BJ (cell line): ENCODE measurements at regions of chr11 and their contacts with region 1.

Region 1: GRCh38 chr11:44621140-44621681 is 55.7 kb downstream of the CD82 start:
- DNase-seq: no peak
- H3K4me3 ChIP-seq: no peak overlapping the region
- H3K27me3 ChIP-seq: no peaks in the 10 kb centered on the region
- CTCF ChIP-seq: peak; percentile 98

Region 2: DNA sequence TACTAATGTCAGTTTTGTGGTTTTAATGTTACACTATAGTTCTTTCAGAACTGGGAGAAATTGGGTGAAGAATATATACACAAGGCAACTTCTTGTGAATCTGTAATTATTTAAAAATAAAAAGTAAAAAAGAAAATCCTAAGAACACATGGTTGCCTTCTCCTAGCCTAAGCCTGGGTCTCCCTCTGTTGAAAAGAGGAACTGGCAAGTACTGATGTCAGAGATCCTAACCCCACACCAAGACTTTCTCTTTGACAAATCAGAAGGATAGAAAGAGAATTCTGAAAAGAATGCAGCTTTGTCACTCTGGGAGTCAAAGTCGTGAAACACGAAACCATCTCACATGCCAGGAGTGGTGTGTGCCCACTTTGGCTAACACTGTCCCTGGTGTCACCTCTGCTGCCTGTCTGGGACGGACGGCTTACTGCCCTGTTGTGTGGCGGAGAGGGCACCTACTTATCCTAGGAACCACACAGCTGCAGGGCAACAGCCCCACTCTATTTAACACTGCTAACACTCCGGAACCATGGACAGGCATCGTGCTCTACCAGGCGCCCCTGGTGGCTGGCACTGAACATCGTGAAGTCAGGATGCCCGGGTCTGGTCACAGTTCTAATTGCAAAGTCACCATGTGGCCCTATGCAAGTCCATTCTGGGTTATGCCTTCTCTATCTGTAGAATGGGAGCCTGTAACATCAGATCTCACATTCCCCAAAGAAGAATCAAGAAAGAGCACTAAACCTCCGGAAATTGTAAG is 164.5 kb before region 1 on chr11:
- CTCF ChIA-PET with region 1: no interaction called
- POLR2A ChIA-PET with region 1: no interaction called
- DNase-seq: no peak
- H3K4me3 ChIP-seq: no peak overlapping the region
- H3K27me3 ChIP-seq: peaks cover 2% of the 10 kb centered on the region; the same call in 1 of the 2 replicates
- CTCF ChIP-seq: no peak

Region 3: DNA sequence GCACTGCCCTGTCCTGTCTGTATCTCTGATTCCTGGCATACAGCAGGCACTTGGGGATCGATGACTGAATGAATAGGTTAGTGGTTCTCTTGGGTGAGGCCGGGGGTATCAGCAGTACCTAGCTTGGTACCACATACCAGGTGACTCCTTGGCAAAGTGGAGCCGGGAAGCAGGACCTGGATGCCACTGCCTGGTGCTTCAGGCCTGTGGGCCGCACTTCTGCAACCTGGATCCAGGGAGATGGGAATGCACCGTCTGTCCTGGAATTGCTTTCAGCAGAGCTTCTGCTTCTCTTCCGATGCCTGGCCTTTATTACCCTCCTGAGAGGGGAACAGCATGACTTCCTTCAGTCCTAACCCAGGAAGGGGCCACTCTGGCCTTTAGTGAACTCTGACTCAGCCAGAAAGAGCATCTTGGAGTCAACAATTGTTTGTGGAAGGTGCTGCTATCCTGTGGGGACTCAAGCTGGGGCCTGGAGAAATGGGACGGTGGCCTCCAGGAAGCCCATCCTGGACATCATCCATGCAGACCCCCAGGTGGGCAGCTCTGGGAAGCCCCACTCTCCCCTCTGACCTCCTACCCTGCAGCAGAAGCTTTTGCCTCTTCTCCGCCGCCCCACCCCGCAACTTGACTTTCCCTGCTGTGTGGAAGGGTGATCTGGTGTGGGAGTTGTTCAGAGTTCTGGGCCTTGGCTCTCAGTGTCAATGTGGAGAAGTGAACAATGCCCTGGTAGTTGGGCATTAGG is 50.6 kb before region 1 on chr11:
- CTCF ChIA-PET with region 1: interaction called, 606 read pairs
- POLR2A ChIA-PET with region 1: no interaction called
- DNase-seq: no peak
- H3K4me3 ChIP-seq: no peak overlapping the region
- H3K27me3 ChIP-seq: no peaks in the 10 kb centered on the region
- CTCF ChIP-seq: no peak

Region 4: GRCh38 chr11:44726283-44727113 is 105.3 kb after region 1 on chr11 and contains the start of gene TSPAN18:
- CTCF ChIA-PET with region 1: interaction called, 11 read pairs
- POLR2A ChIA-PET with region 1: no interaction called
- DNase-seq: no peak
- H3K4me3 ChIP-seq: peak within 1 kb of the TSS; percentile 35
- H3K27me3 ChIP-seq: peaks cover 26% of the 10 kb centered on the region
- CTCF ChIP-seq: no peak
- polyA plus RNA-seq, gene TSPAN18: 0.20 and 0.55 TPM in 2 replicates

Region 5: GRCh38 chr11:44911029-44911814 is 290.0 kb after region 1 on chr11:
- CTCF ChIA-PET with region 1: interaction called, 188 read pairs
- POLR2A ChIA-PET with region 1: no interaction called
- DNase-seq: no peak
- H3K4me3 ChIP-seq: no peak overlapping the region
- H3K27me3 ChIP-seq: 0 out of 2 replicates have a peak, but pooled peaks cover 2% of the 10 kb centered on the region
- CTCF ChIP-seq: peak; percentile 79